ENCODE measurements at regions of chr12 and their contacts with region 1.

Region 1: GRCh38 chr12:92136965-92137721 is 8.5 kb downstream of the BTG1 start:
- DNase-seq: no peak
- H3K4me3 ChIP-seq: peak overlapping the region in 46 of 59 donors; percentile 2 to 99 (median 93)
- H3K27ac ChIP-seq: peak overlapping the region in 12 of 59 donors; percentile 6 to 71 (median 22)
- H3K27me3 ChIP-seq: no peaks in the 10 kb centered on the region
- CTCF ChIP-seq: no peak

Region 2: DNA sequence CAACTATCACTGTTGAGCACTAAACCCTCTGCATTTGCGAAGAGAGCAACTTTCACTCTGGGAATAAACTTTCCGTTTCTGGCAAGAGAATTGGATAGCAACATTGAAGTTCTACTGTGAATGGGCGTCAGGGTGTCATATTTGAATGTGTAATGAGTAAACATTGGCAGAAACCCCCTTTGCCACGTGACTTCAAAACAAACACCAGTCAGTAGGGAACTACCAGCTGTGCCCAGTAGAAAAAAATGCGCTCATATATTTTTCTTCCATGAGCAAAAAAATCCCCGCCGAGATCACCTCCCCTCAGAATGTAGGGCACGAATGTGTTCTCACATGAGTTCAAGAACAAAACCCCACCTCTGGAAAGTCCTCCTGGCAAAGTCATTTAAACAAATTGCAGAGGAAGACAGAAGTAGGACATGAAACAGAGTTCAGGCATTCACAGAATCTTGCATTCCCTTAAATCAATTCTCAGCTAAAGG is 72.1 kb before region 1 on chr12:
- intact Hi-C with region 1: loop called in 1 of 2 experiments (anchors 10 kb)
- DNase-seq: peak in 1 of 10 donors; percentile 33
- H3K4me3 ChIP-seq: peak overlapping the region in 54 of 59 donors; percentile 1 to 62 (median 34)
- H3K27ac ChIP-seq: peak overlapping the region in 16 of 59 donors; percentile 9 to 55 (median 21)
- H3K27me3 ChIP-seq: no peaks in the 10 kb centered on the region
- CTCF ChIP-seq: no peak

Region 3: DNA sequence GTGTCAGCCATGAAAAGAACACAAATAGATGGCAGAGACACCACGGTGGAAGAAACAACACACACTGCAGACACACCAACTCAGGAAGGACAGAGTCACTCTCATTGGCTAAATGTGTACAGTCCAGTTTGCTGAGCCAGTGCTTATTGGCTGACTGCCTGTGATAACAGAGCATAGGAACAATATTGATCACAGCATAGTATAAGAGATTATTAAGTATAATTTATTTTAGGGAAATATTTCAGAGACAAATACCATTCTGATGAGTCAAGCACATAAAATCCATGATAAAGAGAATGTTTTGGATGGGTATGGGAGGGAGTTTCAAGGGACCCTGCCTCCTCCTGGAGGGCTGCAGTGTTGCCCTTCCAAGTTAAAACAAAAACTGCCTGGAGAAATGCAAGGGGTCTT is 42.4 kb before region 1 on chr12:
- intact Hi-C with region 1: no loop called
- DNase-seq: no peak
- H3K4me3 ChIP-seq: no peak overlapping the region
- H3K27ac ChIP-seq: no peak overlapping the region
- H3K27me3 ChIP-seq: no peaks in the 10 kb centered on the region
- CTCF ChIP-seq: no peak

Region 4: GRCh38 chr12:92123780-92124688 is 13.1 kb before region 1 on chr12:
- intact Hi-C with region 1: no loop called
- DNase-seq: no peak
- H3K4me3 ChIP-seq: no peak overlapping the region
- H3K27ac ChIP-seq: peak overlapping the region in 3 of 59 donors; percentile 15 to 26 (median 24)
- H3K27me3 ChIP-seq: no peaks in the 10 kb centered on the region
- CTCF ChIP-seq: no peak